ENCODE measurements at regions of chr20 and their contacts with region 1.

Region 1: DNA sequence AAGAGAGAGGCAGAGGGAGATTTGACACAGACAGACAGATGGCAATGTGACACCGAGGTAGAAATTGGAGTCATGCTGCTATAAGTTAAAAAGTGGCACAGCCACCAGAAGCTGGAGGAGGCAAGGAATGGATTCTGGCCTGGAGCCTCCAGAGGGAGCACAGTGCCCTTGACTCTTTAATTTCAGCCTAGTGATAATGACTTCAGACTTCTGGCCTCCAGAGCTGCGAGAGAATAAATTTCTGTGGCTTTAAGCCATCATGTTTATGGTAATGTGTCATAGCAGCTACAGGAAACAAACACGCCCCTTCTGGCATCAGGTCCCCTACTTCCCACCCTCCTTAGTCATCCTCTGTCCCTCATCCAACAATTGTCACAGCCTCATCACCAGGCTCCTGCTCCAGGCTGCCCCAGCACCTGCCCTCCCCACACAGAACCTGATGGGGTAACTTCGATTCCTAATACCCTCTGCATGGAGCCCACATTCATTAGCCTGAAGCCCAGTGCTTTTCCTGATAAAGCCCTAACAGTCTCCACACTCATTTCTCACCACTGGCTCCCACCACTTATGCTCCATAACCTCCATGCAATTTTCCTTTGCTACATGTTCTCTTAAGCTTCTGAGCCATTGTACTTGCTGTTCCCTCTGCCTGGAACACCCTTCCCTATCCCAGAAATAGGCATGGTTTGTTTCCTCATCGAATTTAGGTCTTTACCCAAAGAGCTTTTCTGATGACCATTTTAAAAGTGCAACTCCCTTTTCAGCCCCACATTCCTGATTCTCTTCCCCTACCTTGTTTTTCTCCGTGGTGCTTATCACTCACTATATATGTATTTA is 69.7 kb upstream of the TOX2 start:
- DNase-seq: peak; percentile 90
- H3K4me3 ChIP-seq: no peak overlapping the region
- H3K27ac ChIP-seq: no peak overlapping the region
- H3K4me1 ChIP-seq: peaks cover 5% of the 10 kb centered on the region
- H3K27me3 ChIP-seq: no peaks in the 10 kb centered on the region
- CTCF ChIP-seq: peak; percentile 49

Region 2: GRCh38 chr20:44080646-44081267 is 235.8 kb after region 1 on chr20:
- CTCF ChIA-PET with region 1: interaction called, 4 read pairs
- POLR2A ChIA-PET with region 1: no interaction called
- intact Hi-C with region 1: loop called (anchors 2 kb)
- DNase-seq: peak; percentile 84
- H3K4me3 ChIP-seq: no peak overlapping the region
- H3K27ac ChIP-seq: peak overlapping the region; percentile 4
- H3K4me1 ChIP-seq: peaks cover 6% of the 10 kb centered on the region
- H3K27me3 ChIP-seq: no peaks in the 10 kb centered on the region
- CTCF ChIP-seq: peak; percentile 98